BJ (cell line): ENCODE measurements at regions of chr4 and their contacts with region 1.

Region 1: GRCh38 chr4:38782452-38783108 is at the start of gene TLR10:
- DNase-seq: no peak
- H3K4me3 ChIP-seq: no peak within 1 kb of the TSS
- H3K27me3 ChIP-seq: no peaks in the 10 kb centered on the region
- CTCF ChIP-seq: peak; percentile 68
- polyA plus RNA-seq, gene TLR10: not detected in 2 replicates

Region 2: DNA sequence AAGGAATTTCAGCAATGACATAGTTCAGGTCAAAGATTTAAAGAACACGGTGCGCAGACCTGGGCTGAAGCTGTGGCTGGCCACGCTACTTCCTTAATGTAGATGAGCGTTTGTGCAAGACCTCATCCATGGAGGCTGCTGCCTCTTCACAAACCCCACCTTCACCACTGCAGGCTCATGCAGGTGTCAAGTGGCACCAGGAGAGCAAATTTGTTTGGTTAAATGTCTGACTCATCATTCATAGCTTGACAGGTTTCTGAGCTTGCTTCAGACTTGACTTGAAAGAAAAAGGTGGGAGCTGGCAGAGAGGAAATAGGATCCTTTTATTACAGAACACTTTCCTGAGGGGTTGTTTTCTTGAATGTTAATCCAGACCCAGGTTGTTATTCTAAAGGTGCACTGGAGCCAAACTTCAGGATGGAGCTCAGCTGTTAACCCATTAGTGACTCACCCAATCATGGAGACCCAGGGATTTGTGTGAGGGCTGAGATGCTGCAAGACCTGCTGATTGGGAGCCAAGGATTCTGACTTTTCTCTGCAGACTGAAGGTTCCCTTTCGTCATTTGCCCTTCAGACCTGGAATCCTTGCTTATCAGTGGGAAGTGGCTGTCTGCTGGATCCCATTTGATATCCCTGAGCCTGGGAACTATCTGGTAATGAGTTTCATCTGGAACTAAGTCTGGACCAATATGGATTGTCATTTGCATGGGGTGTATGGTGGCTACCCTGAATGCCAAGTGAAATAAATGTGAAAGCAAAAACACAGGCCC is 507.1 kb before region 1 on chr4:
- CTCF ChIA-PET with region 1: no interaction called
- POLR2A ChIA-PET with region 1: no interaction called
- DNase-seq: no peak
- H3K4me3 ChIP-seq: no peak overlapping the region
- H3K27me3 ChIP-seq: no peaks in the 10 kb centered on the region
- CTCF ChIP-seq: no peak

Region 3: DNA sequence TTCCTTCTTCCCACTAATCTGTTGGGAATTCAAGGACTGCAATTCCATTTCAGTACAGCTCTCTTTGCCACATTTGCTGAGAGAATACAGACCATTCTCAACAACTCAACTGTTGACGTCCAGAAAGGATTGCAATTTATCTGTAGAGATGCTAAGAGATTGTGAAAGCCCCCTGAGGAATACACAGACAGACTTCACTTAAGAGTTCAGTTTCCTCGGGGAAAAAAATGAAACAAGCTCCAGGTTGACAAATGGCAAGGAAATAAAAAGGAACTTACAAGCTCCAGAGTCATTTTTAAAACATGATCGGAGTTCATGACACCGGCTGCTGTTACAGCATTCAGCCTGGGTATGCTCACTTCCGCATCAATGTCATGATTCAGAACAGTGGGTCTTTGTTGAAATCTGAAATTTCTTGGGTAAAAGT is 13.6 kb before region 1 on chr4:
- CTCF ChIA-PET with region 1: interaction called, 113 read pairs
- POLR2A ChIA-PET with region 1: no interaction called
- DNase-seq: no peak
- H3K4me3 ChIP-seq: no peak overlapping the region
- H3K27me3 ChIP-seq: peaks cover 6% of the 10 kb centered on the region
- CTCF ChIP-seq: no peak

Region 4: DNA sequence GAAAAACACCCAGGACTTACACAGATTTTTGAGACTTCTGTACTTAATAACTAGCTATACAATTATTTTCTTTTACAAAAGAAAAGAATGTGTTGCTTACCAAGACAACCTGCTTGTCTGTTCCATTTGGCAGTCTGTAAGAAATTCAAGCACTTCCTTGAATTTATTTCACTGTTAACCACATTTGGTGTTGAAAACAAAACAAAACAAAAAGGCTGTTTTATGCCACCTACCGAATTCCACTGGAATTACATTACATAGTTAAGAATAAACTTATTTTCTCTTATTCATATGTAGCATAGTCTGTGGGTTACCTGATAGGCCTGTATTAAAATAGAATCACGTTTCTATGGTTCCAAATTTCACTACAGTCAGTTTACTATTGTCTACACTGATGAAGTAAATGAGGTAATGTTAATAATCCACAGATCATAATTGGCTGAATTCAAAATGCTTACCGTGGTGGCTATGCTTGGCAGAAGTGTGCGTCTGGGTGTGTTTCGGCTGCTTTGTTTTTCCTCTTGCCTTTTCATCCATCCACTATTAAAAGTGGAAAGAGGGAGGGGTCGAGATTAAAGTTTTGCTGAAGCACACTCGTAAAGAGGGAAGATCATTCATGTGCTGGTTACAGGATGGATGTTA is 22.2 kb after region 1 on chr4 and contains the start of gene TLR1:
- CTCF ChIA-PET with region 1: interaction called, 13 read pairs
- POLR2A ChIA-PET with region 1: no interaction called
- DNase-seq: no peak
- H3K4me3 ChIP-seq: no peak within 1 kb of the TSS
- H3K27me3 ChIP-seq: no peaks in the 10 kb centered on the region
- CTCF ChIP-seq: peak; percentile 51
- polyA plus RNA-seq, gene TLR1: 0.05 and 0.16 TPM in 2 replicates